CD8-positive, alpha-beta memory T cell (primary cell): ENCODE measurements at regions of chr11 and their contacts with region 1.

Region 1: GRCh38 chr11:125141686-125142535 is 22.6 kb upstream of the PKNOX2 start:
- DNase-seq: peak; percentile 41 to 70 (median 54)
- H3K4me3 ChIP-seq: no peak overlapping the region
- H3K4me3 Mint-ChIP-seq: no peak overlapping the region
- H3K27ac ChIP-seq: no peak overlapping the region
- H3K27ac Mint-ChIP-seq: peak overlapping the region in 1 of 8 donors; percentile 58
- H3K4me1 ChIP-seq: no peaks in the 10 kb centered on the region
- H3K4me1 Mint-ChIP-seq: peaks cover 4 to 5% (median 5%) of the 10 kb centered on the region in 3 donors
- H3K27me3 ChIP-seq: peaks cover 20% of the 10 kb centered on the region
- H3K27me3 Mint-ChIP-seq: peaks cover 19 to 73% of the 10 kb centered on the region in 2 donors

Region 2: GRCh38 chr11:124953753-124954589 is 187.9 kb before region 1 on chr11 and contains the start of gene CCDC15:
- CTCF ChIA-PET with region 1: interaction called, 30 read pairs
- POLR2A ChIA-PET with region 1: no interaction called
- DNase-seq: peak; percentile 92 to 96 (median 94)
- H3K4me3 ChIP-seq: peak within 1 kb of the TSS; percentile 94
- H3K4me3 Mint-ChIP-seq: no peak within 1 kb of the TSS
- H3K27ac ChIP-seq: peak within 1 kb of the TSS; percentile 81
- H3K27ac Mint-ChIP-seq: no peak within 1 kb of the TSS
- H3K4me1 ChIP-seq: peaks cover 51% of the 10 kb centered on the region
- H3K4me1 Mint-ChIP-seq: peaks cover 0 to 6% (median 4%) of the 10 kb centered on the region in 3 donors
- H3K27me3 ChIP-seq: no peaks in the 10 kb centered on the region
- H3K27me3 Mint-ChIP-seq: no peaks in the 10 kb centered on the region
- total RNA-seq, gene CCDC15: 3.6 to 3.7 TPM

Region 3: GRCh38 chr11:124961972-124962609 is 179.8 kb before region 1 on chr11:
- CTCF ChIA-PET with region 1: interaction called, 30 read pairs
- POLR2A ChIA-PET with region 1: no interaction called
- DNase-seq: peak in 2 of 5 donors; percentile 59 to 60
- H3K4me3 ChIP-seq: no peak overlapping the region
- H3K4me3 Mint-ChIP-seq: no peak overlapping the region
- H3K27ac ChIP-seq: no peak overlapping the region
- H3K27ac Mint-ChIP-seq: no peak overlapping the region
- H3K4me1 ChIP-seq: no peaks in the 10 kb centered on the region
- H3K4me1 Mint-ChIP-seq: no peaks in the 10 kb centered on the region
- H3K27me3 ChIP-seq: no peaks in the 10 kb centered on the region
- H3K27me3 Mint-ChIP-seq: no peaks in the 10 kb centered on the region

Region 4: GRCh38 chr11:125091247-125091876 is 50.5 kb before region 1 on chr11:
- CTCF ChIA-PET with region 1: interaction called, 21 read pairs
- POLR2A ChIA-PET with region 1: no interaction called
- DNase-seq: peak in 1 of 5 donors; percentile 13
- H3K4me3 ChIP-seq: no peak overlapping the region
- H3K4me3 Mint-ChIP-seq: no peak overlapping the region
- H3K27ac ChIP-seq: no peak overlapping the region
- H3K27ac Mint-ChIP-seq: peak overlapping the region in 2 of 8 donors; percentile 53 to 60
- H3K4me1 ChIP-seq: no peaks in the 10 kb centered on the region
- H3K4me1 Mint-ChIP-seq: no peaks in the 10 kb centered on the region
- H3K27me3 ChIP-seq: no peaks in the 10 kb centered on the region
- H3K27me3 Mint-ChIP-seq: no peaks in the 10 kb centered on the region

Region 5: GRCh38 chr11:125111343-125112207 is 30.3 kb before region 1 on chr11 and contains the start of gene TMEM218:
- CTCF ChIA-PET with region 1: interaction called, 20 read pairs
- POLR2A ChIA-PET with region 1: no interaction called
- DNase-seq: peak; percentile 91 to 97 (median 95)
- H3K4me3 ChIP-seq: peak within 1 kb of the TSS; percentile 80
- H3K4me3 Mint-ChIP-seq: peak within 1 kb of the TSS; percentile 90 to 100 (median 94)
- H3K27ac ChIP-seq: peak within 1 kb of the TSS; percentile 74
- H3K27ac Mint-ChIP-seq: peak within 1 kb of the TSS; percentile 82 to 99 (median 96)
- H3K4me1 ChIP-seq: peaks cover 17% of the 10 kb centered on the region
- H3K4me1 Mint-ChIP-seq: peaks cover 21 to 38% (median 22%) of the 10 kb centered on the region in 3 donors
- H3K27me3 ChIP-seq: no peaks in the 10 kb centered on the region
- H3K27me3 Mint-ChIP-seq: peaks cover 2% of the 10 kb centered on the region in 2 donors
- total RNA-seq, gene TMEM218: 22.5 to 25.5 TPM

Region 6: DNA sequence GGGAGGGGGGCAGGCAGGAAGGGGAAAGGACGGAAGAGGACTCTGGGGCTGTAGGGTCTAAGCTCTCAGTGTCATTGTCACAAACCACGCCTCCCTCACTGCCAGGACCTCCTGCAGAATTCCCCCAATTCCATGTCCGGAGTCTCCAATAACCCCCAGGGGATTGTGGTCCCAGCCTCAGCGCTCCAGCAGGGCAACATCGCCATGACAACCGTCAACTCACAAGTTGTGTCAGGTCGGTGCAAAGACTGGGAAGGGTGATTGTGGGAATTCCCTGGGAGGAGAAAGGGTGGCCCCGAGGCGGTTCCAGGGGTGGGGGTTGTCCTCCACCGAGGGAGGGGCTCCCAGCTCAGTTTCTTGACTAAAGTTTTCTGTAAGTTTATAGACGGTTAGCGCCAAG is 268.2 kb after region 1 on chr11:
- CTCF ChIA-PET with region 1: no interaction called
- POLR2A ChIA-PET with region 1: no interaction called
- DNase-seq: no peak
- H3K4me3 ChIP-seq: no peak overlapping the region
- H3K4me3 Mint-ChIP-seq: no peak overlapping the region
- H3K27ac ChIP-seq: no peak overlapping the region
- H3K27ac Mint-ChIP-seq: no peak overlapping the region
- H3K4me1 ChIP-seq: no peaks in the 10 kb centered on the region
- H3K4me1 Mint-ChIP-seq: peaks cover 2 to 3% (median 2%) of the 10 kb centered on the region in 3 donors
- H3K27me3 ChIP-seq: peaks cover 8% of the 10 kb centered on the region
- H3K27me3 Mint-ChIP-seq: peaks cover 15 to 54% of the 10 kb centered on the region in 2 donors